Caco-2 (cell line): ENCODE measurements at regions of chr1 and their contacts with region 1.

Region 1: GRCh38 chr1:93712741-93713140 is 31.1 kb upstream of the BCAR3 start:
- DNase-seq: no peak
- H3K4me3 ChIP-seq: no peak overlapping the region
- H3K4me3 Mint-ChIP-seq: no peak overlapping the region
- H3K27ac Mint-ChIP-seq: no peak overlapping the region
- H3K4me1 ChIP-seq: peaks cover 6% of the 10 kb centered on the region; the same call in 1 of the 2 replicates
- H3K4me1 Mint-ChIP-seq: peaks cover 19% of the 10 kb centered on the region
- H3K27me3 ChIP-seq: no peaks in the 10 kb centered on the region
- H3K27me3 Mint-ChIP-seq: no peaks in the 10 kb centered on the region
- CTCF ChIP-seq: no peak

Region 2: GRCh38 chr1:93740601-93741031 is 27.9 kb after region 1 on chr1:
- CTCF ChIA-PET with region 1: no interaction called
- POLR2A ChIA-PET with region 1: no interaction called
- intact Hi-C with region 1: loop called (anchors 1 kb)
- DNase-seq: no peak
- H3K4me3 ChIP-seq: no peak overlapping the region
- H3K4me3 Mint-ChIP-seq: no peak overlapping the region
- H3K27ac Mint-ChIP-seq: no peak overlapping the region
- H3K4me1 ChIP-seq: no peaks in the 10 kb centered on the region
- H3K4me1 Mint-ChIP-seq: no peaks in the 10 kb centered on the region
- H3K27me3 ChIP-seq: no peaks in the 10 kb centered on the region
- H3K27me3 Mint-ChIP-seq: no peaks in the 10 kb centered on the region
- CTCF ChIP-seq: no peak